ENCODE measurements at regions of chr16 and their contacts with region 1.

Region 1: DNA sequence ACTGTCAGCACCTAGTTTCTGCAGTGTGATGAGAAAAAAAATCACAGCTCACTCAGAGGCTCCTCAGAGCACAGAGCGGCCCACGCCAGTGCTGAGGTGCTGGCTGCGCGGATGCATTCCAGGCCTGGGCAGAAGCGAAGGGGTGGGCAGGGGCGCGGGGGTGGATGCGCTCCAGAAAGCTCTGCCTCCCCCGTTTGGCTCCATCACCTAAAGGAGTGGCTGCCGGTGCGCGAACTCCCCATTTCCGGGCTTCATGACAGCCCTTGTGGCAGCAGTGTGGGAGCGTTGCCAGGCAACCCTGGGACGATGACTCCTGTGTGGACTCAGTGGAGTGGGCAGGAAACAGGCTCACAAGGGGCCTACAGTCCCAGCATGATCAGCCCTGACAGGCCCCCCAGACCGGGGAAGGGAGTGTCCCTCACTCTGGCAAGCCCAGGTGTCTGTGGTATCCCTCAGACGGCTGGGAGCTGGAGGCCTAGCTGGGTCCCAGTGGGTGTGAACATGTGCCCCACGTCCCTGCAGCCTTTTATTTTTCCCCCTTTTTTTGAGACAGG is 32.8 kb upstream of the NUDT16L1 start:
- DNase-seq: peak in 8 of 9 experiments; percentile 27 to 90 (median 79)
- ATAC-seq: peak; percentile 47
- H3K4me3 ChIP-seq: peak overlapping the region in 1 of 2 experiments; percentile 44
- H3K4me3 Mint-ChIP-seq: peak overlapping the region; percentile 37
- H3K27ac ChIP-seq: peak overlapping the region; percentile 71 to 73
- H3K27ac Mint-ChIP-seq: peak overlapping the region; percentile 85
- H3K4me1 ChIP-seq: peaks cover 70% of the 10 kb centered on the region
- H3K4me1 Mint-ChIP-seq: peaks cover 63% of the 10 kb centered on the region
- H3K27me3 ChIP-seq: no peaks in the 10 kb centered on the region
- H3K27me3 Mint-ChIP-seq: no peaks in the 10 kb centered on the region
- CTCF ChIP-seq: no peak

Region 2: GRCh38 chr16:4309836-4310266 is 350.7 kb before region 1 on chr16:
- CTCF ChIA-PET with region 1: no interaction called
- POLR2A ChIA-PET with region 1: no interaction called
- intact Hi-C with region 1: no loop called
- DNase-seq: peak; percentile 32 to 74 (median 63)
- ATAC-seq: no peak
- H3K4me3 ChIP-seq: no peak overlapping the region
- H3K4me3 Mint-ChIP-seq: no peak overlapping the region
- H3K27ac ChIP-seq: no peak overlapping the region
- H3K27ac Mint-ChIP-seq: no peak overlapping the region
- H3K4me1 ChIP-seq: peaks cover 22% of the 10 kb centered on the region
- H3K4me1 Mint-ChIP-seq: peaks cover 35% of the 10 kb centered on the region
- H3K27me3 ChIP-seq: peaks cover 6 to 11% of the 10 kb centered on the region in 2 experiments
- H3K27me3 Mint-ChIP-seq: peaks cover 14% of the 10 kb centered on the region
- CTCF ChIP-seq: peak; percentile 45

Region 3: GRCh38 chr16:4675864-4676786 is 15.6 kb after region 1 on chr16:
- CTCF ChIA-PET with region 1: interaction called, 3 read pairs
- POLR2A ChIA-PET with region 1: interaction called, 3 read pairs
- intact Hi-C with region 1: loop called in 1 of 2 experiments (anchors 1 kb)
- DNase-seq: peak; percentile 44 to 90 (median 72)
- ATAC-seq: peak; percentile 89
- H3K4me3 ChIP-seq: peak overlapping the region; percentile 16 to 24
- H3K4me3 Mint-ChIP-seq: peak overlapping the region; percentile 69
- H3K27ac ChIP-seq: peak overlapping the region; percentile 65 to 86
- H3K27ac Mint-ChIP-seq: peak overlapping the region; percentile 96
- H3K4me1 ChIP-seq: peaks cover 31% of the 10 kb centered on the region
- H3K4me1 Mint-ChIP-seq: peaks cover 35% of the 10 kb centered on the region
- H3K27me3 ChIP-seq: no peaks in the 10 kb centered on the region
- H3K27me3 Mint-ChIP-seq: no peaks in the 10 kb centered on the region
- CTCF ChIP-seq: no peak

Region 4: GRCh38 chr16:6629110-6629509 is 1968.6 kb after region 1 on chr16:
- CTCF ChIA-PET with region 1: no interaction called
- POLR2A ChIA-PET with region 1: no interaction called
- intact Hi-C with region 1: no loop called
- DNase-seq: no peak
- ATAC-seq: no peak
- H3K4me3 ChIP-seq: no peak overlapping the region
- H3K4me3 Mint-ChIP-seq: no peak overlapping the region
- H3K27ac ChIP-seq: no peak overlapping the region
- H3K27ac Mint-ChIP-seq: no peak overlapping the region
- H3K4me1 ChIP-seq: no peaks in the 10 kb centered on the region
- H3K4me1 Mint-ChIP-seq: no peaks in the 10 kb centered on the region
- H3K27me3 ChIP-seq: no peaks in the 10 kb centered on the region
- H3K27me3 Mint-ChIP-seq: no peaks in the 10 kb centered on the region
- CTCF ChIP-seq: no peak

Measured in CD8-positive, alpha-beta T cell (primary cell).